CD14-positive monocyte (primary cell): ENCODE measurements at regions of chr2 and their contacts with region 1.

Region 1: DNA sequence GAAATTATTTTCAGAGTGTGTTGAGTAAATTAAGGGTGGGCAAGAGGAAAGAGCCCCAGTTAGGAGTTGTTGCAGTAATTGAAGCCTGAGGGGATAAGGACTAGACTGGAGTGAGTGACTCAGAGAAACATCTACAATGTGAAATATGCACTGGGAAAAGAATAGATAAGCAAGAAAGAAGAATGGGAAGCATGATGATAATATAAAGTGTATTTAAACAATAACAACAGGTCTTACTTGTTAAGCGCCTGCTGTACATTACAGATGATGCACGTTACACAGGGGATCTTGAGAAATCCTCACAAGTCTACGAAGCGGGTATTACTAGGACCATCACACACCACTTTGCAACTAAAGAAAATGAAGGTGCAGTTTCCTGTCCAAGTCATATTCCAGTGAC is 73.6 kb upstream of the STK17B start:
- DNase-seq: no peak
- H3K4me3 ChIP-seq: no peak overlapping the region
- H3K4me3 Mint-ChIP-seq: no peak overlapping the region
- H3K27ac ChIP-seq: no peak overlapping the region
- H3K27ac Mint-ChIP-seq: peak overlapping the region in 2 of 7 donors; percentile 43 to 45
- H3K4me1 ChIP-seq: peaks cover 67 to 75% of the 10 kb centered on the region in 2 donors
- H3K4me1 Mint-ChIP-seq: peaks cover 71% of the 10 kb centered on the region
- H3K27me3 ChIP-seq: no peaks in the 10 kb centered on the region
- H3K27me3 Mint-ChIP-seq: peaks cover 0 to 4% (median 0%) of the 10 kb centered on the region in 3 donors
- CTCF ChIP-seq: no peak

Region 2: GRCh38 chr2:195861821-195862220 is 383.1 kb before region 1 on chr2:
- intact Hi-C with region 1: no loop called
- DNase-seq: no peak
- H3K4me3 ChIP-seq: no peak overlapping the region
- H3K4me3 Mint-ChIP-seq: no peak overlapping the region
- H3K27ac ChIP-seq: no peak overlapping the region
- H3K27ac Mint-ChIP-seq: no peak overlapping the region
- H3K4me1 ChIP-seq: peaks cover 7 to 9% of the 10 kb centered on the region in 2 donors
- H3K4me1 Mint-ChIP-seq: peaks cover 12% of the 10 kb centered on the region
- H3K27me3 ChIP-seq: no peaks in the 10 kb centered on the region
- H3K27me3 Mint-ChIP-seq: no peaks in the 10 kb centered on the region
- CTCF ChIP-seq: no peak

Region 3: GRCh38 chr2:196149948-196150347 is 95.0 kb before region 1 on chr2:
- intact Hi-C with region 1: no loop called
- DNase-seq: peak; percentile 55 to 71 (median 56)
- H3K4me3 ChIP-seq: peak overlapping the region in 1 of 3 experiments; percentile 40
- H3K4me3 Mint-ChIP-seq: no peak overlapping the region
- H3K27ac ChIP-seq: peak overlapping the region in 1 of 2 donors; percentile 74
- H3K27ac Mint-ChIP-seq: peak overlapping the region; percentile 59 to 89 (median 80)
- H3K4me1 ChIP-seq: peaks cover 15 to 37% of the 10 kb centered on the region in 2 donors
- H3K4me1 Mint-ChIP-seq: peaks cover 43% of the 10 kb centered on the region
- H3K27me3 ChIP-seq: no peaks in the 10 kb centered on the region
- H3K27me3 Mint-ChIP-seq: peaks cover 0 to 4% (median 0%) of the 10 kb centered on the region in 3 donors
- CTCF ChIP-seq: no peak

Region 4: GRCh38 chr2:196268538-196269338 is 23.8 kb after region 1 on chr2:
- intact Hi-C with region 1: loop called (anchors 1 to 2 kb)
- DNase-seq: peak; percentile 74 to 88 (median 74)
- H3K4me3 ChIP-seq: peak overlapping the region; percentile 26 to 62 (median 36)
- H3K4me3 Mint-ChIP-seq: peak overlapping the region; percentile 45 to 66
- H3K27ac ChIP-seq: peak overlapping the region; percentile 85 to 94
- H3K27ac Mint-ChIP-seq: peak overlapping the region; percentile 92 to 97 (median 95)
- H3K4me1 ChIP-seq: peaks cover 37 to 49% of the 10 kb centered on the region in 2 donors
- H3K4me1 Mint-ChIP-seq: peaks cover 38% of the 10 kb centered on the region
- H3K27me3 ChIP-seq: no peaks in the 10 kb centered on the region
- H3K27me3 Mint-ChIP-seq: peaks cover 0 to 1% (median 0%) of the 10 kb centered on the region in 3 donors
- CTCF ChIP-seq: no peak